Activated CD4-positive, alpha-beta T cell treated with anti-CD3 and anti-CD28 coated beads, Interleukin-2, amount 10 ng/mL, durations not matched to agents 24 days and 14 days (primary cell): ENCODE measurements at regions of chr16 and their contacts with region 1.

Region 1: DNA sequence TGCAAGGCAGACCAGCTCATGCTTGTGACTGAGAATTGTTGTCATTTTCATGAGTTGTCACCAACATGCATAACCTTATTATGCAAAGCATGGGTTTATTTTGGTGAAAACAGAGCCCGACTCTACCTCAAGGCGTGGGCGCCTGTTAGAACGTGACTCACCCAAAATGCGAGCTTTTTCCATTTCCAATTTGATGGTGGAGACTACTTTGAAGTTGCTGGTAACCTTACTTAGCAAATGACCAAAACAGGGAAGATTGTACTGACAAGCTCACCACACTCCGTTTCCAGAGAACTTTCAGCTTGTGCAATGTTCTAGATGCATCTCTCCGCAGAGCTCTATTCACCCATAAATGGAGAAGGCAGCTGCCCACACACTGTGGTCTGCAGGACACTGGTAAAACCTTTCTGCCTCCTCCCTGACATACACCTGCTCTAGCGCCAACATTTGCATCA is 284.5 kb downstream of the MAF start:
- DNase-seq: peak; percentile 84
- H3K4me3 Mint-ChIP-seq: peak overlapping the region; percentile 68
- H3K27ac Mint-ChIP-seq: peak overlapping the region; percentile 87
- H3K4me1 Mint-ChIP-seq: peaks cover 31% of the 10 kb centered on the region
- H3K27me3 Mint-ChIP-seq: peaks cover 25% of the 10 kb centered on the region

Region 2: GRCh38 chr16:78896280-78896679 is 419.8 kb before region 1 on chr16:
- intact Hi-C with region 1: loop called (anchors 1 kb)
- DNase-seq: no peak
- H3K4me3 Mint-ChIP-seq: no peak overlapping the region
- H3K27ac Mint-ChIP-seq: peak overlapping the region; percentile 56
- H3K4me1 Mint-ChIP-seq: peaks cover 33% of the 10 kb centered on the region
- H3K27me3 Mint-ChIP-seq: peaks cover 2% of the 10 kb centered on the region

Region 3: GRCh38 chr16:79169239-79169638 is 146.8 kb before region 1 on chr16:
- intact Hi-C with region 1: loop called (anchors 5 kb)
- DNase-seq: peak; percentile 82
- H3K4me3 Mint-ChIP-seq: no peak overlapping the region
- H3K27ac Mint-ChIP-seq: no peak overlapping the region
- H3K4me1 Mint-ChIP-seq: peaks cover 10% of the 10 kb centered on the region
- H3K27me3 Mint-ChIP-seq: no peaks in the 10 kb centered on the region

Region 4: DNA sequence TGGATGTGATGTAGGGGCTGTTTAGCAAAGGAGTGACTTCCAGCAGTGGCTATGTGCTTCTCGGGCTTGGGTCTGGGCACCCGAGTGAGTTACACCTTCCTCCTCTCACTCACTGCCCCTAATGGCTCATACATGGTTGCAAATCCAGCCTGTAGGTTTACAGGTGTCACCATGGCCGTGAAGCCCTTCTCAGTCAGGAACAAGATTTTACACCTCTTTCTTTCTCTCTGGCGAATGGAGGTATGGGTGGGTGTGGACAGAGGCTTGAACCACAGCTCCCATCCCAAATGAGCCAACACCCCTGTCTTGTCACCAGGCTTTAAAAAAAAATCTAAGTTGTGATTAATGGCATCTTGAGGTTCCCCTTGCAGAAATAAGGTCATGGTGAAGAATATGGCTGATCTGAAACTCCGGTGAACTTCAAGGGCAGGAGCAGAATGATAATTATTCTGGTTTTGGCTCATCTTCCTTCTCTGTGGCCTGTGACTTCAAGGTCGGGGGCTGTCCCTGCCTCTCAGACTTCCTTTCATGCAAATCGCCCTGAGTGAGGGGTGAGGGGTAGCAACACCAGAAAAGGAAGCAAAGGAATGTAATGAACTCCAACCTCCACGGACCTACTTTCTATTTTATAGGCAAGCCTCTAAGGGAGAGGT is 46.7 kb before region 1 on chr16:
- intact Hi-C with region 1: loop called (anchors 1 kb)
- DNase-seq: peak; percentile 88
- H3K4me3 Mint-ChIP-seq: peak overlapping the region; percentile 56
- H3K27ac Mint-ChIP-seq: peak overlapping the region; percentile 86
- H3K4me1 Mint-ChIP-seq: peaks cover 74% of the 10 kb centered on the region
- H3K27me3 Mint-ChIP-seq: peaks cover 9% of the 10 kb centered on the region

Region 5: GRCh38 chr16:79355600-79356358 is 39.7 kb after region 1 on chr16:
- intact Hi-C with region 1: no loop called
- DNase-seq: no peak
- H3K4me3 Mint-ChIP-seq: no peak overlapping the region
- H3K27ac Mint-ChIP-seq: no peak overlapping the region
- H3K4me1 Mint-ChIP-seq: no peaks in the 10 kb centered on the region
- H3K27me3 Mint-ChIP-seq: peaks cover 4% of the 10 kb centered on the region

Region 6: DNA sequence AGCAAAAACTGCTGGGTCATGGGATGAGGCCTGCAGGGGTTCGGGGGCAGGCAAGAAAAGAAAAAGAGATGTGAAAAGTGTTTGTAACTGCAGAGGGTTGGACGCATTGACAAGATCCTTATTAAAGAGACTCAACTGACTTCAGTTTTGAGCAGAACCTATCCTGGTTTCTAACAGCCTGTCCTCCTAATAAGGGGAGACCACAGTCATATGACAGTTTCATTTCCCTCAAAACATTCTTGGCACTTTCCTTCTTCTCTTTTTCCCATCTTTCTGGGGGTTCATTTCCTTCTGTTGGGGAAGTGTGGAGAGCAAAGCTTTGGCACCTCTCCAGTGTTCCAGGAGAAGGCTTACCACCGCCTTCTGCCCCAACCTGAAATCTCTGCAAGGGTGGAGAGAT is 166.0 kb after region 1 on chr16:
- intact Hi-C with region 1: no loop called
- DNase-seq: no peak
- H3K4me3 Mint-ChIP-seq: no peak overlapping the region
- H3K27ac Mint-ChIP-seq: no peak overlapping the region
- H3K4me1 Mint-ChIP-seq: no peaks in the 10 kb centered on the region
- H3K27me3 Mint-ChIP-seq: peaks cover 8% of the 10 kb centered on the region

Region 7: DNA sequence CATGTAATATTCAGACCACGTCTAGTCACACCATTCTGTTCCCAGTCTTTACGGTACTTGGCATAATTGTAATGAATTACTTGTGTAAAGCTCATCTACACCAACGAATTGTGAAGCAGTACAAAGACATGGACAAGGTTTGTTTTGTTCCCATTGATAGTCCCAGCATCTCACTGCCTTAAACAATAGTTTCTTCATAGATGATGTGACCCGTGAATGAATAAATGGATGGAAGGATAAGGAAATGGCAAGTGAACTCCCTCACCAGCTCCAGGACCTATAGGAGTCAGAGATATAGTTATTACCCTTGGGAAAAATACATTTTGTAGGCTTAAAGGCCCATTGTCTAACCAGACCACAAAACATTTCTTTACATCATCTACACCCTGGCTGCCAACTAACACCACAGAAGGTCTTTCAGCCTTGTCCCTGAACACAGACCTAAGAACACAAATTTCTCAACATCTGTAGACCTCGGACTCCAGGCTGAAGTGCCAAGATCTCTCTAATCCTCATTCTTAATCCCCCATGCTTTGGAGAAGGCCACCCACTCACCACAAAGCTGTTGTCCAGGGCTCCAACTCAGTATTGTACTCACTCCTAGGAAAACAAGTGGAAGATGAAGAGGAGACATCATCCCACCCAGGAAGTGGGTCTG is 246.3 kb after region 1 on chr16:
- intact Hi-C with region 1: no loop called
- DNase-seq: no peak
- H3K4me3 Mint-ChIP-seq: no peak overlapping the region
- H3K27ac Mint-ChIP-seq: no peak overlapping the region
- H3K4me1 Mint-ChIP-seq: no peaks in the 10 kb centered on the region
- H3K27me3 Mint-ChIP-seq: peaks cover 27% of the 10 kb centered on the region

Region 8: GRCh38 chr16:79628501-79628975 is 312.5 kb after region 1 on chr16:
- intact Hi-C with region 1: loop called (anchors 1 kb)
- DNase-seq: peak; percentile 91
- H3K4me3 Mint-ChIP-seq: peak overlapping the region; percentile 70
- H3K27ac Mint-ChIP-seq: peak overlapping the region; percentile 88
- H3K4me1 Mint-ChIP-seq: peaks cover 57% of the 10 kb centered on the region
- H3K27me3 Mint-ChIP-seq: peaks cover 15% of the 10 kb centered on the region